CD8-positive, alpha-beta T cell (primary cell): ENCODE measurements at regions of chr2 and their contacts with region 1.

Region 1: GRCh38 chr2:64914735-64915509 is 74.3 kb upstream of the SLC1A4 start:
- DNase-seq: no peak
- ATAC-seq: no peak
- H3K4me3 ChIP-seq: no peak overlapping the region
- H3K4me3 Mint-ChIP-seq: no peak overlapping the region
- H3K27ac ChIP-seq: no peak overlapping the region
- H3K27ac Mint-ChIP-seq: no peak overlapping the region
- H3K4me1 ChIP-seq: no peaks in the 10 kb centered on the region
- H3K4me1 Mint-ChIP-seq: peaks cover 23% of the 10 kb centered on the region
- H3K27me3 ChIP-seq: no peaks in the 10 kb centered on the region
- H3K27me3 Mint-ChIP-seq: no peaks in the 10 kb centered on the region
- CTCF ChIP-seq: no peak

Region 2: GRCh38 chr2:64859312-64860212 is 55.4 kb before region 1 on chr2:
- CTCF ChIA-PET with region 1: no interaction called
- POLR2A ChIA-PET with region 1: no interaction called
- intact Hi-C with region 1: no loop called
- DNase-seq: peak in 1 of 9 experiments; percentile 31
- ATAC-seq: no peak
- H3K4me3 ChIP-seq: peak overlapping the region in 1 of 2 experiments; percentile 8
- H3K4me3 Mint-ChIP-seq: peak overlapping the region; percentile 58
- H3K27ac ChIP-seq: no peak overlapping the region
- H3K27ac Mint-ChIP-seq: no peak overlapping the region
- H3K4me1 ChIP-seq: peaks cover 15% of the 10 kb centered on the region
- H3K4me1 Mint-ChIP-seq: peaks cover 5% of the 10 kb centered on the region
- H3K27me3 ChIP-seq: peaks cover 4 to 6% of the 10 kb centered on the region in 2 experiments
- H3K27me3 Mint-ChIP-seq: peaks cover 5% of the 10 kb centered on the region
- CTCF ChIP-seq: no peak

Region 3: GRCh38 chr2:64945973-64946768 is 31.2 kb after region 1 on chr2:
- CTCF ChIA-PET with region 1: interaction called, 14 read pairs
- POLR2A ChIA-PET with region 1: interaction called, 3 read pairs
- intact Hi-C with region 1: no loop called
- DNase-seq: peak; percentile 30 to 80 (median 55)
- ATAC-seq: peak; percentile 88
- H3K4me3 ChIP-seq: peak overlapping the region; percentile 31 to 40
- H3K4me3 Mint-ChIP-seq: peak overlapping the region; percentile 74
- H3K27ac ChIP-seq: peak overlapping the region; percentile 2 to 66
- H3K27ac Mint-ChIP-seq: peak overlapping the region; percentile 86
- H3K4me1 ChIP-seq: peaks cover 24% of the 10 kb centered on the region
- H3K4me1 Mint-ChIP-seq: peaks cover 32% of the 10 kb centered on the region
- H3K27me3 ChIP-seq: no peaks in the 10 kb centered on the region
- H3K27me3 Mint-ChIP-seq: no peaks in the 10 kb centered on the region
- CTCF ChIP-seq: no peak

Region 4: GRCh38 chr2:65031341-65032018 is 116.6 kb after region 1 on chr2:
- CTCF ChIA-PET with region 1: interaction called, 66 read pairs
- POLR2A ChIA-PET with region 1: no interaction called
- intact Hi-C with region 1: loop called in 1 of 2 experiments (anchors 2 kb)
- DNase-seq: peak in 4 of 9 experiments; percentile 4 to 53 (median 18)
- ATAC-seq: peak; percentile 55
- H3K4me3 ChIP-seq: peak overlapping the region in 1 of 2 experiments; percentile 6
- H3K4me3 Mint-ChIP-seq: peak overlapping the region; percentile 32
- H3K27ac ChIP-seq: no peak overlapping the region
- H3K27ac Mint-ChIP-seq: peak overlapping the region; percentile 42
- H3K4me1 ChIP-seq: peaks cover 22% of the 10 kb centered on the region
- H3K4me1 Mint-ChIP-seq: peaks cover 26% of the 10 kb centered on the region
- H3K27me3 ChIP-seq: no peaks in the 10 kb centered on the region
- H3K27me3 Mint-ChIP-seq: no peaks in the 10 kb centered on the region
- CTCF ChIP-seq: no peak

Region 5: DNA sequence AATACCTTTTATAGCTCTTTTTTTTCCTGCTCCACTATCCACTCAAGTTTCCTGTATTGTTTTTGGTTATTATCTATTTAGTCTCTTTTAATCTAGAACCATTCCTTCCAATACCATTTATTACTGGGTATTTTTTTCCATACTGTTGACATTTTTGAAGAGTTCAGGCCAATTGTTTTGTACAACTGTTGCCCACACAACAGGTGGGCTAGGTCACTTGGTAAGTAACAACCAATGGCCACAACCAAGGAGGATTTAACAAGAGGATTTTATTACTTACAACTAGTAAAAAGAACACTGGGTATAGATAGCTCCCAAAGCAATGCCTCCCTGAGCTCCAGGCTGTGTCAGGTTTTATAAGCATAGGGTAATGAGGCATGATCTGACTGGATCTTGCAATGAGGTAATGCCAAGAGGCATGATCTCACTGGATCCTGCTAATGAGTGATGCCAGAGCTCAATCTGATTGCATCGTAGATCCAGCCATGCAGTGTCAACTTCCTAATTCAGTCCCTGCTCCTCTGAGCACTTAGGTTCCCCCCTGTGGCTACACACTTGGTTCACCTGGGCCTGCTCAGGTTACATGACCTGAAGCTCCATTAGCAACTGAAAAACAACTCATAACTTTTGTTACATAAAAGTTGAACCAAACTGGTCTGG is 134.2 kb after region 1 on chr2:
- CTCF ChIA-PET with region 1: interaction called, 41 read pairs
- POLR2A ChIA-PET with region 1: no interaction called
- intact Hi-C with region 1: no loop called
- DNase-seq: no peak
- ATAC-seq: no peak
- H3K4me3 ChIP-seq: no peak overlapping the region
- H3K4me3 Mint-ChIP-seq: no peak overlapping the region
- H3K27ac ChIP-seq: no peak overlapping the region
- H3K27ac Mint-ChIP-seq: no peak overlapping the region
- H3K4me1 ChIP-seq: peaks cover 23% of the 10 kb centered on the region
- H3K4me1 Mint-ChIP-seq: peaks cover 19% of the 10 kb centered on the region
- H3K27me3 ChIP-seq: no peaks in the 10 kb centered on the region
- H3K27me3 Mint-ChIP-seq: no peaks in the 10 kb centered on the region
- CTCF ChIP-seq: no peak

Region 6: DNA sequence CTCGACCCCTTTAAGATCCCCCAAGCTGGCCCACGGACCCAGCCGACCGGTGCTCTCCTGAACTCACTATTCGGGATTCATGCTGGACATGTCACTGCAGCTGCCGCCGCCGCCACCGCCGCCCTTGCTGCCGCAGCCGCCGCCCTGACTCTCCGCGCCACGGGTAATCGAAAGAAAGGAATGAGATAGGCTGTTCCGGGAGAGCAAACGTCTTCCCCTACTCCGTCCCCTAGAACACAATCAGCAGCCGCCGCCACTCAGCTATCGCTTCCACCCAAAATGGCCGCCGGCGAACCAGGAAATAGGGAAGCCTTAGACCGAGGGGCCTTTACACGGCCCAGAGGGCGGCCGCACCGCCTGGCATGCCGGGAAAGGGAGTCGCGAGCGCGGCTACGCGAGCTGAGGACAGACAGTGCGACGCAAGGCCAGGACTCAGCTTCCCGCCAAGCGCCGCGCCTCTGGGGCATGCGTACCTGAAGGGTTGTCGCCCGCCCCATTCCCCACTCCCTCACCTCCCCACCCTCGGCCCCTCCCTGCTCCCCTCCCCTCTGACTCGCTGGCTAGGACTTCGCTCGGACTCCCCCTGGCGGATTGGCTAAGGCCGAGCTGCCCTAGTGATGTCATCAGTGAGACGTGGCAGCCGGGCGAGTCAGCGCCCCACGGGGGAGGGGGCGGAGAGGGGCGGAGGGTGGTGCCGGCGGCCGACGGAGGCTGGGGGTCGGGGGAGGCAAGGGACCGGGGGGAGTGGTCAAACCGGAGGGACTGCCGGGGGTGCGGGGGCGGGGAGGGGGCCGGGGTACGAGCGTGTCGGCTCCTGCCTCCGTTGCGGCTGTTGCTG is 215.1 kb after region 1 on chr2 and contains the start of gene RAB1A:
- CTCF ChIA-PET with region 1: interaction called, 6 read pairs
- POLR2A ChIA-PET with region 1: interaction called, 3 read pairs
- intact Hi-C with region 1: loop called in 1 of 2 experiments (anchors 1 kb)
- DNase-seq: peak; percentile 98 to 100 (median 99)
- ATAC-seq: peak; percentile 94
- H3K4me3 ChIP-seq: peak within 1 kb of the TSS; percentile 87 to 88
- H3K4me3 Mint-ChIP-seq: peak within 1 kb of the TSS; percentile 99
- H3K27ac ChIP-seq: peak within 1 kb of the TSS; percentile 91 to 97
- H3K27ac Mint-ChIP-seq: peak within 1 kb of the TSS; percentile 98
- H3K4me1 ChIP-seq: peaks cover 40% of the 10 kb centered on the region
- H3K4me1 Mint-ChIP-seq: peaks cover 44% of the 10 kb centered on the region
- H3K27me3 ChIP-seq: no peaks in the 10 kb centered on the region
- H3K27me3 Mint-ChIP-seq: no peaks in the 10 kb centered on the region
- CTCF ChIP-seq: no peak
- total RNA-seq, gene RAB1A: 101 to 103 TPM

Region 7: GRCh38 chr2:65186872-65187851 is 272.2 kb after region 1 on chr2:
- CTCF ChIA-PET with region 1: interaction called, 12 read pairs
- POLR2A ChIA-PET with region 1: no interaction called
- intact Hi-C with region 1: loop called (anchors 1 to 5 kb)
- DNase-seq: peak; percentile 35 to 74 (median 63)
- ATAC-seq: peak; percentile 88
- H3K4me3 ChIP-seq: no peak overlapping the region
- H3K4me3 Mint-ChIP-seq: no peak overlapping the region
- H3K27ac ChIP-seq: no peak overlapping the region
- H3K27ac Mint-ChIP-seq: no peak overlapping the region
- H3K4me1 ChIP-seq: peaks cover 6% of the 10 kb centered on the region
- H3K4me1 Mint-ChIP-seq: peaks cover 9% of the 10 kb centered on the region
- H3K27me3 ChIP-seq: no peaks in the 10 kb centered on the region
- H3K27me3 Mint-ChIP-seq: peaks cover 10% of the 10 kb centered on the region
- CTCF ChIP-seq: peak; percentile 60

Region 8: DNA sequence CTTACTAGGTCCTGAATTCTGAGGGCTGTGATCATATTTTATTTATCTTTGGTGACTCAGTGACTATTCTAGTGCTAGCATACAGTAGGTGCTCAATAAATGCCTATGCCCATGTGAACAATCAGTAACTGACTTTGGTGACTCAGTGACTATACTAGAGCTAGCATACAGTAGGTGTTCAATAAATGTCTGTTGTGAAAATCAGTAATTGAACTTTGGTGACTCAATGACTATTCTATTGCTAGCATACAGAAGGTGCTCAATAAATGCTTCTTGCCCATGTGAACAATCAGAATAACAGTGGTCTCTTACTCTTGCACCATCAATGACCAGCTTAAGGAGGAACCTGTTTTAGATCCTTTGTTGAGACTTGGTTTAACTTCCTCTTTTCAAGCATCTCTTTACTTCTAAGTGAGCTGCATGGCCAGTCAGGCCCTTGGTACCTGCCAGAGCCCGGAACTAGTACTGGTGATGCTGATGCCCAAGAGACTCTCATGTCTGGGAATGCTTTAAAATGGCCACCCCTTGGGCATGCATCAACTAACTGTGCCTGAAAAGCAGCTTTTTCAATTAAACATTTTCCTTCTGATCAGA is 732.4 kb after region 1 on chr2:
- CTCF ChIA-PET with region 1: no interaction called
- POLR2A ChIA-PET with region 1: no interaction called
- intact Hi-C with region 1: no loop called
- DNase-seq: no peak
- ATAC-seq: no peak
- H3K4me3 ChIP-seq: no peak overlapping the region
- H3K4me3 Mint-ChIP-seq: no peak overlapping the region
- H3K27ac ChIP-seq: no peak overlapping the region
- H3K27ac Mint-ChIP-seq: no peak overlapping the region
- H3K4me1 ChIP-seq: no peaks in the 10 kb centered on the region
- H3K4me1 Mint-ChIP-seq: no peaks in the 10 kb centered on the region
- H3K27me3 ChIP-seq: no peaks in the 10 kb centered on the region
- H3K27me3 Mint-ChIP-seq: no peaks in the 10 kb centered on the region
- CTCF ChIP-seq: no peak